ENCODE measurements at regions of chr3 and their contacts with region 1.

Region 1: GRCh38 chr3:149120051-149120972 is 9.1 kb upstream of the HPS3 start:
- DNase-seq: peak; percentile 33
- H3K4me3 ChIP-seq: no peak overlapping the region
- H3K27ac ChIP-seq: no peak overlapping the region
- H3K27me3 ChIP-seq: no peaks in the 10 kb centered on the region
- CTCF ChIP-seq: peak; percentile 59

Region 2: DNA sequence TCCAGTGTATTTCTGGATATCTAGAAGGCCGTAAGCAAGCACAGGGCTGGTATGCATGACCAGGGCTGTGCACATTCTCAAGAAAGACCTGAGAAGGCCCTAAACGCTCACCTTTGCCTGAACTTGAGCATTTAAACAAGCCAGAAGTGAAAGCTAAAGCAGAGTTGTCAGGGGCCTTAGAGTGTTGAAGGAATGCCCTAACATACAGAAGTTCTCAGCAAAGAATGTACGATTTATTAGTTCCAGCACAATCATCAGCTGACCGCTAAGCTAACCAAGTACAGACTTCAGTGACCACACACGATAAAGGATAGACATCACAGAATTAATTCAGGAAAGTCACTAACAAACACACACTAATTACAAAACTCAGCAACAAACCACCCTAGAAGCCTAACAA is 42.7 kb before region 1 on chr3:
- CTCF ChIA-PET with region 1: interaction called, 12 read pairs
- POLR2A ChIA-PET with region 1: no interaction called
- DNase-seq: peak; percentile 10
- H3K4me3 ChIP-seq: no peak overlapping the region
- H3K27ac ChIP-seq: no peak overlapping the region
- H3K27me3 ChIP-seq: no peaks in the 10 kb centered on the region
- CTCF ChIP-seq: no peak

Region 3: DNA sequence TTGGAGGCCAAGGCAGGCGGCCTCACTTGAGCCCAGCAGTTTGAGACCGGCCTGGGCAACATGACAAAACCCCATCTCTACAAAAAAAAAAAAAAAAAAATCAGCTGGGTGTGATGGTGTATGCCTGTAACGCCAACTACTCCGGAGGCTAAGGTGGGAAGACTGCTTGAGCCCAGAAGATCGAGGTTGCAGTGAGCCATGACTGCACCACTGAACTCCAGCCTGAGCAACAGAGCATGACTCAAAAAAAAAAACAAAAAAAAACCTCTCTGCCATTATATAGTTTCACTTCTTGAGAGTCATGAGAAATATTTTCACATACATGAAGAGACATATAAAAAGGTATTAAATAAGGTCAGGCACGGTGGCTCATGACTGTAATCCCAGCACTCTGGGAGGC is 147.3 kb after region 1 on chr3:
- CTCF ChIA-PET with region 1: interaction called, 153 read pairs
- POLR2A ChIA-PET with region 1: interaction called, 3 read pairs
- DNase-seq: no peak
- H3K4me3 ChIP-seq: no peak overlapping the region
- H3K27ac ChIP-seq: no peak overlapping the region
- H3K27me3 ChIP-seq: no peaks in the 10 kb centered on the region
- CTCF ChIP-seq: no peak

Region 4: DNA sequence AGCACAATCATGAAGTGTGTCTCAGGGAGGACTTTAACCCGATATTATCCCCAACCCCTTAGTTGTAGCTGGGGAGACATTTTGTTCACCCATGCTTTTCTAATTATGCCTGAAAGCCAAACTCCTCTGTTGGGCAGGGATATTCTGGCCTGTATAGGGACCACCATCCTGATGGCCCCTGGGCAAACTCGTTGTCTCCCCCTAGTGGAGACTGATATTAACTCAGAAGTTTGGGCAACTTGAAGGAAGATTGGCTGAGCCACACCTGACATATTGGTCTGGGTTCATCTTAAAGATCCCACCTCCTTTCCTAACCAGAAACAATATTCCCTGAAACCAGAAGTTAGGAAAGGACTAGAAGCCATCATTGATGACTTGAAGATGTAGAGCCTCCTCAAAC is 170.9 kb after region 1 on chr3:
- CTCF ChIA-PET with region 1: no interaction called
- POLR2A ChIA-PET with region 1: no interaction called
- DNase-seq: no peak
- H3K4me3 ChIP-seq: no peak overlapping the region
- H3K27ac ChIP-seq: no peak overlapping the region
- H3K27me3 ChIP-seq: no peaks in the 10 kb centered on the region
- CTCF ChIP-seq: peak; percentile 37

Region 5: DNA sequence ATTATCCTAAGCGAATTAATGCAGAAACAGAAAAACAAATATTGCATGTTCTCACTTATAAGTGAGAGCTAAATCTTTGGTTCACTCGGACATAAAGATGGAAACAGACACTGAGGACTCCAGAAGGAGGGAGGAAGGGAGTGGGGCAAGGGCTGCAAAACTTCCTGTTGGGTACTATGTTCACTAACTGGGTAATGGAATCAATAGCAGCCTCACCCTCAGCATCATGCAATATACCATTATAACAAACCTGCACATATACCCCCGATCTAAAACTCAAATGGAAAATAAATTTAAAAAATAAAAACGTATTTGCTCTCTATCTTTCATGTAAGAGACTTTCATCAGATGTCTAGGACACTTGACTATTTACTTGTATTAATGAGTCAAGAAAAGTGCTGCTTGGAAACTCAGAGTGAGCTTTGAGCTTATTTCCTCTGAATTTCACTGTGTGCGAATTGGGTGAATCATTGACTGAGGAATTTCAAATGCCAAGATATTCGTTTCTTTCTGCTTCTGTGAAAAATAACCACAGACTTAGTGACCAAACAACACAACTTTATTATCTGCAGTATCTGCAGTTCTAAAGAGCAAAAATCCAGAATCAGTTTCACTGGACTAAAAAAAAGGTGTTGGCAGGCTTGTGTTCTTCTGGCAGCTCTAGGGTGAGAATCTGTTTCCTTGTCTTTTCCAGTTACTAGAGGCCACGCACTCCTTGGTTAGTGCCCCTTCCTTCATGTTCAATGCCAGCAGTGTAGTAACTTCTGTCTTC is 194.7 kb after region 1 on chr3:
- CTCF ChIA-PET with region 1: interaction called, 11 read pairs
- POLR2A ChIA-PET with region 1: no interaction called
- DNase-seq: peak; percentile 15
- H3K4me3 ChIP-seq: no peak overlapping the region
- H3K27ac ChIP-seq: no peak overlapping the region
- H3K27me3 ChIP-seq: no peaks in the 10 kb centered on the region
- CTCF ChIP-seq: no peak

Region 6: DNA sequence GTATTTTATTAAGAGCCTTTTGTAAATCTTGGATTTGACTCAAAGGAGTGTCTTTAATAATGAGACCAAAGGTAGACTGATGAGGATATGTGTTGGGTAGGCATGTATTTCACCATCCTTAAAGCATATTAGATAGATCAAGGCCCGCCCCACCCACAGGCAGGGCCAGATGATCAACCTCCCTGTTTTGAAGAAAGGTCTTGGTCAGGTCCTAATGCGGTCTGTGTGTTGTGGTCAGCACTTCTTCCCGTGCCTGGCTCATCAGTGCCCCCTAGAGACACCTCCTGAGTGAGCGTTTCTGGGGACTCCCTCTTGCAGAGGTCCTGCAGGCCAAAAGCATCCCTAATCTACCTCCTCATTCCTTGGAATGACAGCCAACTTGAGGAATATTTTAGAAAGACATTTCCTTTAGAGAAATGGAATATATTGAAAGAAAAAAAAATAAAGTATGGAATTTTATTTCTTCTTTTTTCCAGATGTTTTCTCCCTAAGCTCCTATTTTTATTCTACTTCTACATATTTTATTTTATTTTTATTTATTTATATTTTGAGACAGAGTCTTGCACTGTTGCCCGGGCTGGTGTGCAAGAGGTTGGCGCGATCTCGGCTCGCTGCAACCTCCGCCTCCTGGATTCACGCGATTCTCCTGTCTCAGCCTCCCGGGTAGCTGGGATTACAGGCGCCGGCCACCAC is 360.2 kb after region 1 on chr3:
- CTCF ChIA-PET with region 1: interaction called, 27 read pairs
- POLR2A ChIA-PET with region 1: no interaction called
- DNase-seq: peak; percentile 73
- H3K4me3 ChIP-seq: no peak overlapping the region
- H3K27ac ChIP-seq: no peak overlapping the region
- H3K27me3 ChIP-seq: no peaks in the 10 kb centered on the region
- CTCF ChIP-seq: peak; percentile 98

Measured in AG04450 (cell line).